GM12878 (cell line): ENCODE measurements at regions of chr10 and their contacts with region 1.

Region 1: DNA sequence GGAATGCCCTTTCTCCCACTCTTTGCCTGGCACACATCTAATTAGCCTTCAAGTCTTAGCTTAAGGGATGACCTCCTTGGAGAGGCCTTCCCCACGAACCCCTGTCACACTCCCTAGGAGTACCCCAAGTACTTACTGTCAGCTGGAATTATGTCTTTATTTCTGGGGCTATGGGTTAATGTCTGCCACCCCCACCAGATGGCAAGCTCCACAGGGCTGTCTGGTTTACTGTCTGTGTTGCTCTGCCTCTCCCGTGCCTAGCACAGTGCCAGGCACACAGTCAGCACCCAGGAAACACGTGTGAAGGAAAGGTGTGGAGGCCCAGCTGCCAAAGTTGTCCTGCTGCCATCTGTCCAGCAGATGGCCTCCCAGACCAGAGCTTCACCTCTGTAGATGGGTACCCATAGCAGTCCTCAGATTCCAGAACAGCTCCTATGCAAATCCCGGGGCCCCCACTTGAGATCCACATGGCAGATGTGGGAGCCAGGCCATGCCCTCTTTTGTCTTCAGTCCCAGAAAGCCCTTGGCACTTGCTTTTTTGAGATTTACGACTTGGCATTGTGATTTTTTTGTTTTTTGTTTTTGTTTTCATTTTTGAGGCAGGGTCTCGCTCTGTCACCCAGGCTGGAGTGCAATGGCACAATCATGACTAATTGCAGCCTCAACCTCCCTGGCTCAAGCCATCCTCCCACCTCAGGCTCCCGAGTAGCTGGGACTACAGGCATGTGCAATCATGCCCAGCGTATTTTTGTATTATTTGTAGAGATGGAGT is 17.2 kb upstream of the PALD1 start:
- DNase-seq: no peak
- ATAC-seq: peak; percentile 88
- H3K4me3 ChIP-seq: no peak overlapping the region
- H3K27ac ChIP-seq: no peak overlapping the region
- H3K4me1 ChIP-seq: no peaks in the 10 kb centered on the region
- H3K27me3 ChIP-seq: peaks cover 3 to 5% of the 10 kb centered on the region in 2 experiments; a peak in 3 of 4 replicates
- CTCF ChIP-seq: peak; percentile 88 to 95 (median 90)
- EP300 ChIP-seq: no peak
- POLR2A ChIP-seq: no peak
- RAD21 ChIP-seq: peak; percentile 98

Region 2: DNA sequence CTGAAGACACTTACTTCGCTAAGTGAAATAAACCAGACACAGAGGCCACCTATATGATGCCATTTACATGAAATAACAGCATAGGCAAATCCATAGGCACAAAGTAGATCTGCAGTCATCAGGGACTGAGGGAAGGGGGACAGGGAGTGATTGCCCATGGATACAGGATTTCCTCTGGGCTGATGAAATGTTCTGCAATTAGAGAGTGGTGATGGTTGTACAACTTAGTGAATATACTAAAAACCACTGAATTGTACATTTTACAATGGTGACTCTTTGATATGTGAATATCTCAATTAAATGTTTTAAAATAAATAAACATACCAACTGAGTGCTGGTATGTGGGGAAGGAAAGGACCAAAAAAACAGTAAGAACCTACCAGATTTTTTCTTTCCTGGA is 248.5 kb before region 1 on chr10:
- CTCF ChIA-PET with region 1: no interaction called
- POLR2A ChIA-PET with region 1: no interaction called
- RAD21 ChIA-PET with region 1: no interaction called
- SMC1A ChIA-PET with region 1: no interaction called
- in situ Hi-C with region 1: no loop called
- intact Hi-C with region 1: no loop called
- DNase-seq: no peak
- ATAC-seq: no peak
- H3K4me3 ChIP-seq: no peak overlapping the region
- H3K27ac ChIP-seq: no peak overlapping the region
- H3K4me1 ChIP-seq: no peaks in the 10 kb centered on the region
- H3K27me3 ChIP-seq: no peaks in the 10 kb centered on the region
- CTCF ChIP-seq: no peak
- EP300 ChIP-seq: no peak
- POLR2A ChIP-seq: no peak
- RAD21 ChIP-seq: no peak

Region 3: GRCh38 chr10:70478191-70479164 is 17.1 kb after region 1 on chr10 and contains the start of gene PALD1:
- CTCF ChIA-PET with region 1: interaction called, 25 read pairs
- POLR2A ChIA-PET with region 1: interaction called, 5 read pairs
- RAD21 ChIA-PET with region 1: interaction called, 15 read pairs
- SMC1A ChIA-PET with region 1: interaction called, 8 read pairs
- in situ Hi-C with region 1: no loop called
- intact Hi-C with region 1: no loop called
- DNase-seq: no peak
- ATAC-seq: peak; percentile 63
- H3K4me3 ChIP-seq: peak within 1 kb of the TSS; percentile 78
- H3K27ac ChIP-seq: peak within 1 kb of the TSS; percentile 64
- H3K4me1 ChIP-seq: peaks cover 50% of the 10 kb centered on the region
- H3K27me3 ChIP-seq: no peaks in the 10 kb centered on the region
- CTCF ChIP-seq: no peak
- EP300 ChIP-seq: no peak
- POLR2A ChIP-seq: peak; percentile 67
- RAD21 ChIP-seq: no peak
- polyA plus RNA-seq, gene PALD1: 0.43 to 1.2 TPM

Region 4: DNA sequence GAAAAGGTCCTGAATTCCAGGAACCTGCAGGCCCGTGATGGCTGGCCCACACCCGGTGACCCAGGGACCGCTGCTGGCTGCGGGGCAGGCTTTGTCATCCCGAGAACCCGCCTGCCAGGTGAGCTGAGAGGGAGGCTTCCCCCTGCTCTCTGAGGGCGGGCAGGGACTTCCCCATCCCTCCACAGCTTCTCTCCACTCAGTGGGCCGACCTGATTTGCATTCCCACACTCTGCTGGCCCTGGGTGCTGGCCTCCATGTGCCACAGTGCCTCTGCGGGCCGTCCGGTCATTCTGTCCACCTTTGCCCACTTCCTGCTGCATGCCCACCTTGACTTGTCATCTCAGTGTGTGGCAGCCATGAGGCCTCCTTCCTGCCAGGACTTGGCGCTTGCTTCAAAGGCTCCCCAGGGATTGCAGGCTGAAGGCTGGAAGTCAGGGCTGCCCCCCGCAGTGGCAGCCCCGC is 52.5 kb after region 1 on chr10:
- CTCF ChIA-PET with region 1: interaction called, 12 read pairs
- POLR2A ChIA-PET with region 1: no interaction called
- RAD21 ChIA-PET with region 1: interaction called, 5 read pairs
- SMC1A ChIA-PET with region 1: interaction called, 4 read pairs
- in situ Hi-C with region 1: no loop called
- intact Hi-C with region 1: no loop called
- DNase-seq: peak; percentile 51
- ATAC-seq: peak; percentile 99
- H3K4me3 ChIP-seq: no peak overlapping the region
- H3K27ac ChIP-seq: no peak overlapping the region
- H3K4me1 ChIP-seq: peaks cover 18% of the 10 kb centered on the region
- H3K27me3 ChIP-seq: no peaks in the 10 kb centered on the region
- CTCF ChIP-seq: no peak
- EP300 ChIP-seq: no peak
- POLR2A ChIP-seq: no peak
- RAD21 ChIP-seq: no peak

Region 5: GRCh38 chr10:70540089-70540788 is 78.8 kb after region 1 on chr10:
- CTCF ChIA-PET with region 1: interaction called, 74 read pairs
- POLR2A ChIA-PET with region 1: interaction called, 3 read pairs
- RAD21 ChIA-PET with region 1: interaction called, 15 read pairs
- SMC1A ChIA-PET with region 1: interaction called, 11 read pairs
- in situ Hi-C with region 1: loop called (anchors 5 kb)
- intact Hi-C with region 1: loop called (anchors 1 kb)
- DNase-seq: no peak
- ATAC-seq: peak; percentile 72
- H3K4me3 ChIP-seq: no peak overlapping the region
- H3K27ac ChIP-seq: no peak overlapping the region
- H3K4me1 ChIP-seq: no peaks in the 10 kb centered on the region
- H3K27me3 ChIP-seq: no peaks in the 10 kb centered on the region
- CTCF ChIP-seq: peak; percentile 66 to 75 (median 70)
- EP300 ChIP-seq: no peak
- POLR2A ChIP-seq: no peak
- RAD21 ChIP-seq: peak; percentile 94

Region 6: GRCh38 chr10:70602665-70603448 is 141.5 kb after region 1 on chr10 and contains the start of gene PRF1:
- CTCF ChIA-PET with region 1: no interaction called
- POLR2A ChIA-PET with region 1: no interaction called
- RAD21 ChIA-PET with region 1: no interaction called
- SMC1A ChIA-PET with region 1: no interaction called
- in situ Hi-C with region 1: no loop called
- intact Hi-C with region 1: no loop called
- DNase-seq: no peak
- ATAC-seq: peak; percentile 64
- H3K4me3 ChIP-seq: no peak within 1 kb of the TSS
- H3K27ac ChIP-seq: no peak within 1 kb of the TSS
- H3K4me1 ChIP-seq: no peaks in the 10 kb centered on the region
- H3K27me3 ChIP-seq: no peaks in the 10 kb centered on the region
- CTCF ChIP-seq: no peak
- EP300 ChIP-seq: no peak
- POLR2A ChIP-seq: no peak
- RAD21 ChIP-seq: no peak
- polyA plus RNA-seq, gene PRF1: 1.7 to 1.9 TPM

Region 7: GRCh38 chr10:70758757-70759514 is 297.5 kb after region 1 on chr10:
- CTCF ChIA-PET with region 1: interaction called, 17 read pairs
- POLR2A ChIA-PET with region 1: no interaction called
- RAD21 ChIA-PET with region 1: interaction called, 23 read pairs
- SMC1A ChIA-PET with region 1: interaction called, 4 read pairs
- in situ Hi-C with region 1: loop called (anchors 5 kb)
- intact Hi-C with region 1: loop called (anchors 1 kb)
- DNase-seq: peak; percentile 17
- ATAC-seq: peak; percentile 80
- H3K4me3 ChIP-seq: no peak overlapping the region
- H3K27ac ChIP-seq: no peak overlapping the region
- H3K4me1 ChIP-seq: no peaks in the 10 kb centered on the region
- H3K27me3 ChIP-seq: no peaks in the 10 kb centered on the region; a peak in 2 of 4 replicates
- CTCF ChIP-seq: peak; percentile 64 to 88 (median 67)
- EP300 ChIP-seq: no peak
- POLR2A ChIP-seq: no peak
- RAD21 ChIP-seq: peak; percentile 88